MCF 10A (cell line): ENCODE measurements at regions of chr5 and their contacts with region 1.

Region 1: DNA sequence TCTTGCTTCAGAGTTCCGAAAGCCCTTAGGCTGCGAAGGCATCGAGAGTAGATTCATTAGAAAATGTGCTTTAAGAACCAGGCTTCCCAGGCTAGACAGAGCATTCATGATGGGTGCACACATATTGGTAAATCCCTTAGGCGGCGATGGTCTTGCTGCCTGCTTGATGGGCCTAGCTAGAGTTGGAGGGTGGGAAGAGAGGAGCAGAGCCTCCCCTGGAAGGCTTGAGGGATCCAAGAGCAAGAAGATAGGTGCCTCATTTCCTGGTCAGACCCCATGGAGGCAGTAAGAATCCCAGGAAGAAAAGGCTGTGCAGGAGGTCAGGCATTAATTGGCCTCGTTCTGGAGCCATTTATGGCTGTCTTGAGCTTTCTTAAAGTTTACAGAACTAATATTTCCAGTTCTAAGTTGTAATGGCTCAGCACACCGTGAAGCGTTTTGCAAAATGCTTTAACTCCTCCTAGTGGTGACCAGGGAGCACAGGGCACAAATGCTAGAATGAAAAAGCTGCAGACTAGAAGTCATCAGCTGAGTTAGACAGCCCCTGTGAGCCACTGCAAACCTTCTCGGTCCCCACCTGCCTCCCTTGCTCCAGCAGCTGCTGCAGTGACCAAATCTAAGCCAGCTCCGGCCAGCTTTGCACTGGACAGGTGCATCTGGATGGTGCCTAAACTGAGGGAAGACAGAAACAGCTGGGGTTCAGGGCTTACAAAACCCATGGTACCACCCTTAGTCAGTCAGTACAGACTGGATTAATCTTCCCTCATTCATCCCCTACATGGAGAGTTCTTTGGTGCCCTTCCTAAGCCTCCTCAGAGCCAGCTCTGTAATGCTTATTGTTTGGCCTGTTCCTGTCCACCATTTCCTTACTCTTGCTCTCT is 14.7 kb downstream of the SLC45A2 start:
- DNase-seq: peak; percentile 35
- H3K4me3 Mint-ChIP-seq: no peak overlapping the region
- H3K27ac Mint-ChIP-seq: no peak overlapping the region
- H3K4me1 Mint-ChIP-seq: no peaks in the 10 kb centered on the region
- H3K27me3 Mint-ChIP-seq: no peaks in the 10 kb centered on the region
- CTCF ChIP-seq: peak; percentile 56

Region 2: GRCh38 chr5:33433303-33434240 is 536.2 kb before region 1 on chr5:
- CTCF ChIA-PET with region 1: interaction called, 24 read pairs
- POLR2A ChIA-PET with region 1: interaction called, 3 read pairs
- intact Hi-C with region 1: loop called (anchors 1 kb)
- DNase-seq: no peak
- H3K4me3 Mint-ChIP-seq: no peak overlapping the region
- H3K27ac Mint-ChIP-seq: no peak overlapping the region
- H3K4me1 Mint-ChIP-seq: peaks cover 5% of the 10 kb centered on the region
- H3K27me3 Mint-ChIP-seq: no peaks in the 10 kb centered on the region
- CTCF ChIP-seq: no peak

Region 3: DNA sequence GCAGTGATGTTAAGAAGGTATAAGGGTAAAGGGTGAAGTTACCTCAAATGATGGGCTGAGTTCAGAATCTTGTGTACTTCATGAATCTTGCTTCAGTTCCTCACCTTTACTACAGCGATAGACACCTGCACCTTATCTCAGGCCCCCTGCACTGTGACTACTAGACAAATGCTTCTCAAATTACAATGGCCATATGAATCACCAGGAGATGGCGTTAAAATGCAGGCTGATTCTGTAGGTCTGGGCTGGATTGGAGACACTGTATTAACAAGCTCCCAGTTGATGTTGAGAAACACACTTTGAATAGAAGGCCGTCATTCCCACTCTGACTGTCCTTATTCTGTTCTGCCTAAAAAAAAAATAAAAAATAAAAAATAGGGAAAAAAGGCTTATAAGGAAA is 499.3 kb before region 1 on chr5:
- CTCF ChIA-PET with region 1: interaction called, 11 read pairs
- POLR2A ChIA-PET with region 1: no interaction called
- intact Hi-C with region 1: no loop called
- DNase-seq: peak; percentile 33
- H3K4me3 Mint-ChIP-seq: no peak overlapping the region
- H3K27ac Mint-ChIP-seq: no peak overlapping the region
- H3K4me1 Mint-ChIP-seq: no peaks in the 10 kb centered on the region
- H3K27me3 Mint-ChIP-seq: no peaks in the 10 kb centered on the region
- CTCF ChIP-seq: no peak

Region 4: GRCh38 chr5:34022121-34022705 is 52.4 kb after region 1 on chr5:
- CTCF ChIA-PET with region 1: no interaction called
- POLR2A ChIA-PET with region 1: no interaction called
- intact Hi-C with region 1: no loop called
- DNase-seq: no peak
- H3K4me3 Mint-ChIP-seq: no peak overlapping the region
- H3K27ac Mint-ChIP-seq: no peak overlapping the region
- H3K4me1 Mint-ChIP-seq: peaks cover 6% of the 10 kb centered on the region
- H3K27me3 Mint-ChIP-seq: no peaks in the 10 kb centered on the region
- CTCF ChIP-seq: no peak